Right ventricle myocardium inferior (tissue), 1 donor: ENCODE measurements at regions of chr11 and their contacts with region 1.

Region 1: GRCh38 chr11:130449996-130450769 is 1.7 kb downstream of the ADAMTS15 start:
- DNase-seq: peak; percentile 94
- ATAC-seq: peak; percentile 78

Region 2: DNA sequence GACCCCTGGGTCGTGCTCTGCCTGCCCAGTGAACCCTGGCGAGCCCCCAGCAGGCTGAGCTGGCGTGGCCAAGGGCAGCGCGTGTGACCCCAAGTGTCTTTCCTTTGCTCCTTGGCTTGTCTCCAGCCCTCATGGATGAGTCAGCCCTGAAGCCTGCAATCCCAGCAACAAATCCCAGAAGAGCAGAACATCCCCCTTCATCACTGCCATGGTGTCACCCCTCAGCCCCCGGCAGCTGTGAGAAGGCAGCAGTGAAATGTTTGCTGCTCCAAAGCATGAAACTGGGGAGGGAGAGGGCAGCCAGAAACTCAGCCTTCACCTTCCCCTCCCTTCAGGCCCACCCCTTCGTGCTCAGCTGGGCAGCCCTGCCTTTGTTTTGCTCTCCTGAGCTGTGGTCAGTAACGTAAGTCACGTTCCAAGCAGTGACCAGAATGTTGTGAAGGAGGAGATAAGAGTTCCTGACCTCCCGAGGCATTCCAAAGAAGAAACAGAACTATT is 28.1 kb after region 1 on chr11:
- intact Hi-C with region 1: loop called (anchors 1 kb)
- DNase-seq: no peak
- ATAC-seq: peak; percentile 70

Region 3: DNA sequence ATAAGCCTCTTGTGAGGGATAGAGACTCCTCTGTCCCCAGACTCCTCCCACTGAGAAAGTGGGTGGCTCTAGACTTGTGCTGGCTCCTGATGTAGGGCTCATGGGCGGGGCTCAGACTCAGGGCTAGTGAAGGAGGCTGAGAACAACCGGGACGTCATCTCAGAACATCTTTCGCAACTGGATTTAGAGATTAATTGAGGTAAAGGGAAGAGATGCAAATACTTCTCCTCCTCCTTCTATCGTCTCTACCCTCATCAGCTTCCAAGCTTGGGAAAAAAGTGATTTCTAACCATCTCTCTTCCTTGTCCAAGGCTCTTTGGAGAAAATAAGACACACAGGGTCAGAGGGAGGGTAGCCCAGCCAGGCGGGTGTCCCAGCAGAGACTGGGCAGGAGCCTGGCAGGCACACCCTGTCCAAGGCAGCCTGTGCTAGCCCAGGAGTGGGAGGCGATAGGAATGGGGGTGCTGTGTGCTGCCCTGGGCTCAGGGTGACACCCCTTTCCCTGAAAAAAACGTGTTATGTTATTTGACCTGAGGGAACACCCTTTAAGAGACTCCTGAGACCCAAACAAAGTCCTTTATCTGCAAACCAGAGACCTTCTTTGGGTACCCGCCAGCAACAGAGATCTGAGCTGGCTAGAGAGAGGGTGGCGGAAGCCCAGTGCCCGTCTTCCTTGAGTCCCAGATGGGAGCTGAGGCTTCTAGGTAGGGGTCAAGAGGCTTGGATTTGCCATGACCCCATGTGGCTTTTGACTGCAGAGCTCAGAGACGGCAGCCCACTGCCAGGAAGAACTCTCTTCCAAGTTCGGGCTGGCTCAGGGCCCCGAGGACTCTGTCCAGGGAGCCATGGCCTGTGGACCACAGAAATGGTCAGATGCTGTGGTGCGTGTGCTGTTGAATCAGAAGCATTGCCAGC is 159.2 kb after region 1 on chr11:
- intact Hi-C with region 1: loop called (anchors 5 kb)
- DNase-seq: peak; percentile 92
- ATAC-seq: peak; percentile 89

Region 4: GRCh38 chr11:130671801-130672700 is 221.9 kb after region 1 on chr11:
- intact Hi-C with region 1: loop called (anchors 1 kb)
- DNase-seq: peak; percentile 83
- ATAC-seq: peak; percentile 74

Region 5: GRCh38 chr11:130726234-130727037 is 276.3 kb after region 1 on chr11:
- intact Hi-C with region 1: loop called (anchors 5 kb)
- DNase-seq: no peak
- ATAC-seq: peak; percentile 90